SK-N-SH (cell line): ENCODE measurements at regions of chr14 and their contacts with region 1.

Region 1: GRCh38 chr14:64823305-64823861 is 56.3 kb downstream of the SPTB start:
- DNase-seq: peak; percentile 89
- H3K4me3 ChIP-seq: no peak overlapping the region; a peak in 1 of 4 replicates
- H3K27ac ChIP-seq: no peak overlapping the region
- H3K4me1 ChIP-seq: peaks cover 0 to 22% of the 10 kb centered on the region in 2 experiments; a peak in 1 of 4 replicates
- H3K27me3 ChIP-seq: no peaks in the 10 kb centered on the region
- CTCF ChIP-seq: peak; percentile 78
- EP300 ChIP-seq: no peak
- RAD21 ChIP-seq: peak; percentile 80

Region 2: GRCh38 chr14:64772393-64772950 is 50.9 kb before region 1 on chr14:
- CTCF ChIA-PET with region 1: interaction called, 13 read pairs
- POLR2A ChIA-PET with region 1: no interaction called
- DNase-seq: no peak
- H3K4me3 ChIP-seq: no peak overlapping the region
- H3K27ac ChIP-seq: no peak overlapping the region
- H3K4me1 ChIP-seq: peaks cover 0 to 3% of the 10 kb centered on the region in 2 experiments; a peak in 1 of 4 replicates
- H3K27me3 ChIP-seq: no peaks in the 10 kb centered on the region
- CTCF ChIP-seq: no peak; the same call in none of the 2 replicates
- EP300 ChIP-seq: no peak
- RAD21 ChIP-seq: no peak

Region 3: DNA sequence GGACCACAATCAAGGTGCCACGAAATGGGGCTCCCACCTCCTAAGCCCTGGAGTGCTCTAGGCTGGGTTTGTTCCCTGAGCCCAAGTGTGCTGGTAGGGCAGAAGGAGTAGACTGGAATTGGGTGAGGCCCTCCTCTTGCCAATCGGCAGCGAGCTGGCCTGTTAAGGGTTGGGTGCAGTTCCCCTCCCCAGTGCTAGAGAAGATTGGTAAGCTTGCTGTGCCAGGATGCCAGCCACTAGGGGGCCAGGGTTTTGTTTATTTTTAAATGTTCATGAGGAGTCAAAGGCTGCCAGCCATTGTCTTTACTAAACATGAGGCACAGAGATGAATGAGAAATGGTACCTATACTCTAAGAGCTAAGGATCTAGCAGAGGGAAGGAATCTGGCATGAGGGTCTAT is 23.4 kb before region 1 on chr14:
- CTCF ChIA-PET with region 1: interaction called, 63 read pairs
- POLR2A ChIA-PET with region 1: no interaction called
- DNase-seq: peak; percentile 50
- H3K4me3 ChIP-seq: no peak overlapping the region
- H3K27ac ChIP-seq: no peak overlapping the region
- H3K4me1 ChIP-seq: peaks cover 2 to 27% of the 10 kb centered on the region in 2 experiments
- H3K27me3 ChIP-seq: no peaks in the 10 kb centered on the region
- CTCF ChIP-seq: peak; percentile 75
- EP300 ChIP-seq: no peak
- RAD21 ChIP-seq: peak; percentile 22; the same call in 1 of the 2 replicates

Region 4: GRCh38 chr14:64841121-64841651 is 17.8 kb after region 1 on chr14:
- CTCF ChIA-PET with region 1: interaction called, 21 read pairs
- POLR2A ChIA-PET with region 1: no interaction called
- DNase-seq: no peak
- H3K4me3 ChIP-seq: no peak overlapping the region
- H3K27ac ChIP-seq: no peak overlapping the region
- H3K4me1 ChIP-seq: peaks cover 4 to 5% of the 10 kb centered on the region in 2 experiments; a peak in 3 of 4 replicates
- H3K27me3 ChIP-seq: no peaks in the 10 kb centered on the region
- CTCF ChIP-seq: peak; percentile 66
- EP300 ChIP-seq: no peak
- RAD21 ChIP-seq: no peak

Region 5: GRCh38 chr14:64865109-64865508 is 41.7 kb after region 1 on chr14:
- CTCF ChIA-PET with region 1: interaction called, 11 read pairs
- POLR2A ChIA-PET with region 1: no interaction called
- DNase-seq: no peak
- H3K4me3 ChIP-seq: no peak overlapping the region
- H3K27ac ChIP-seq: no peak overlapping the region
- H3K4me1 ChIP-seq: no peaks in the 10 kb centered on the region
- H3K27me3 ChIP-seq: no peaks in the 10 kb centered on the region
- CTCF ChIP-seq: no peak
- EP300 ChIP-seq: no peak
- RAD21 ChIP-seq: no peak

Region 6: GRCh38 chr14:64899958-64900357 is 76.6 kb after region 1 on chr14:
- CTCF ChIA-PET with region 1: interaction called, 14 read pairs
- POLR2A ChIA-PET with region 1: no interaction called
- DNase-seq: no peak
- H3K4me3 ChIP-seq: no peak overlapping the region
- H3K27ac ChIP-seq: no peak overlapping the region
- H3K4me1 ChIP-seq: no peaks in the 10 kb centered on the region
- H3K27me3 ChIP-seq: no peaks in the 10 kb centered on the region
- CTCF ChIP-seq: no peak
- EP300 ChIP-seq: no peak
- RAD21 ChIP-seq: no peak